Ascending aorta (tissue), 2 donors: ENCODE measurements at regions of chr1 and their contacts with region 1.

Region 1: GRCh38 chr1:20633190-20634064 is at the start of gene PINK1:
- DNase-seq: peak; percentile 33 to 94
- H3K4me3 ChIP-seq: peak within 1 kb of the TSS; percentile 94 to 98
- H3K27ac ChIP-seq: peak within 1 kb of the TSS; percentile 90 to 96
- H3K4me1 ChIP-seq: peaks cover 11% of the 10 kb centered on the region in 2 donors
- H3K27me3 ChIP-seq: no peaks in the 10 kb centered on the region
- CTCF ChIP-seq: peak; percentile 95 to 100 (median 98)
- total RNA-seq, gene PINK1: 113 TPM

Region 2: DNA sequence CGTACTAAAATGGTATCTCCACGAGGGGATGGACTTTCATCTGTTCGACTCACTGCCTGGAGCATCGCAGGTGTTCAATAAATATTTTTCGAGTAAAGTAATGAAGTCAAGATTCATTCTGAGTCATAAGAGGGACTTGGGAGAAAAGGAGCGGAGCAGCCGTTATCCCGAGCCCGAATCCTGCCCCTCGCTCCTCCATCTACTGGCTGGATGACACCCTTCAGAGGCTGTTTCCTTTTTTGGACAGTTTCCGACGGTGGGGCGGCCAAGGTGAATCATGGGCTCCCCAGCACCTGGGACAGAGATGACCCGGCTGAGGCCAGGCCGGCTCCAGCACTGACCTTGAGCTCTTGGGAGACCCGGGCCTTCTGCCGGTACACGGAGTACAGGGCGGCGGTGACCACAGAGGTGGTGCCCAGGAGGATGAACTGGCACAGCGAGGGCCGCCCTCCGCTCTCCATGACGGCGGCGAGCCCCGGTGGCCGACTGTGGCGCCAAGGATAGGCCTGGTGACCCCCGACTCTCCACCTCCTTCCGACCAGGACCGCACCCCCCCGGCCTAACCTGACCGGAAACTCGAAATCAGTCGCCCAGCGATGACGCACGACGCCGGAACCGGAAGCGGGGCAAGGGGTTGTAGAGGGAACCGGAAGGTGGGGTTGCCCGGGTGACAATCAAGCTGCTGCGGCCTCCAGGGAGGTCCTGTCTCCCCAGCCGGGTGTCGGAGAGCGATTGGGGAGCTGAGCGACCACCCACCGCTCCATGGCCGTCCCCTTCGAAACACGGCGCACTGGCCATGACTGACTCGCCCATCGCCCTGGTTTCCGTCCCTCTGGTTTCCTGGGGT is 125.6 kb before region 1 on chr1 and contains the start of gene MUL1:
- intact Hi-C with region 1: loop called (anchors 1 kb)
- DNase-seq: peak; percentile 80 to 97
- H3K4me3 ChIP-seq: peak within 1 kb of the TSS; percentile 72 to 98
- H3K27ac ChIP-seq: peak within 1 kb of the TSS; percentile 63 to 90
- H3K4me1 ChIP-seq: peaks cover 0 to 24% of the 10 kb centered on the region in 2 donors
- H3K27me3 ChIP-seq: no peaks in the 10 kb centered on the region
- CTCF ChIP-seq: no peak
- total RNA-seq, gene MUL1: 34.7 TPM

Region 3: DNA sequence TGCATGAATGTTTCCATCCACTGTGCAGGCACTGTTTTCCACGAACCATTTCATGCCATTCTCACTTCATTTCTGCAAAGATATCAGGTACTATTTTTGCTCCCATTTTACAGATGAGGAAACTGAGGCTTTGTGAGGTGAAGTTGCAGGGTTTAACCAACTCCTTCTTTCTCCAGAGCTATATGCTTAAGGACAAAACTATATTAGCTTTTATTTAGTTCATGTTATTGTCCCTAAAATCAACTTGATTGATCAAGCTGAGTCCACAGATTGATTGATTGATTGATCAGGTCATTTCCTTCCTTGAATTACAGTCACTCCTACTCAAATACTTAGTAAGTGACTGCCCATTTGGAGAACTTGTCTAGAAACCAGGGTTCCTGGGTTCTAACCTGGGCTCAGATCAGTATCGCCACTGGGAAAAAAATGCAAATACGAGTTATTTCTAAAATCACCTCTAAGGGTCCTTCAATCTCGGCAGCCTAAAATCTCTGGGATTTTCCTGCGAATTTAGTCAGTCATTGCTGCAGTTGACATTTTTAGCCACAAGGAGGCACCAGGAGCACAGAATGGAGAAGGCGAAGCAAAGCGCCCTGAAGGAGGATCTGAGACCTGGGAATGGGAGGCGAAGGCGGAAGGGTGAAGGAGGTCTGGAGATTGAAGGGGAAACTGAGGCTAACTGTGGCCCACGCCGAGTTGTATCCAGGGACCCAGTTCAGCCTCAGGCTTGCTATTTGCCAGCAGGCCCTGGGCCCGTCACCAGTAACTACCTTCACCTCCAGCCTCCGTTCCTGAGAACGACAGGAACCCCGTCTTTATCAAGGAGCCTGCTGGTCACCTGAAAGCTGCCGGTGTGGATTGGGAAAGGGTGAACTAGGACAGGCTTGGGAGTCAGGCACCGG is 111.2 kb before region 1 on chr1:
- intact Hi-C with region 1: loop called (anchors 1 kb)
- DNase-seq: peak in 1 of 2 donors; percentile 89
- H3K4me3 ChIP-seq: peak overlapping the region; percentile 3 to 30
- H3K27ac ChIP-seq: no peak overlapping the region
- H3K4me1 ChIP-seq: no peaks in the 10 kb centered on the region
- H3K27me3 ChIP-seq: no peaks in the 10 kb centered on the region
- CTCF ChIP-seq: peak; percentile 90 to 94 (median 93)

Region 4: GRCh38 chr1:20574686-20575540 is 58.5 kb before region 1 on chr1:
- intact Hi-C with region 1: loop called (anchors 5 kb)
- DNase-seq: peak; percentile 20 to 76
- H3K4me3 ChIP-seq: no peak overlapping the region
- H3K27ac ChIP-seq: no peak overlapping the region
- H3K4me1 ChIP-seq: no peaks in the 10 kb centered on the region
- H3K27me3 ChIP-seq: no peaks in the 10 kb centered on the region
- CTCF ChIP-seq: peak; percentile 37 to 57 (median 37)

Region 5: DNA sequence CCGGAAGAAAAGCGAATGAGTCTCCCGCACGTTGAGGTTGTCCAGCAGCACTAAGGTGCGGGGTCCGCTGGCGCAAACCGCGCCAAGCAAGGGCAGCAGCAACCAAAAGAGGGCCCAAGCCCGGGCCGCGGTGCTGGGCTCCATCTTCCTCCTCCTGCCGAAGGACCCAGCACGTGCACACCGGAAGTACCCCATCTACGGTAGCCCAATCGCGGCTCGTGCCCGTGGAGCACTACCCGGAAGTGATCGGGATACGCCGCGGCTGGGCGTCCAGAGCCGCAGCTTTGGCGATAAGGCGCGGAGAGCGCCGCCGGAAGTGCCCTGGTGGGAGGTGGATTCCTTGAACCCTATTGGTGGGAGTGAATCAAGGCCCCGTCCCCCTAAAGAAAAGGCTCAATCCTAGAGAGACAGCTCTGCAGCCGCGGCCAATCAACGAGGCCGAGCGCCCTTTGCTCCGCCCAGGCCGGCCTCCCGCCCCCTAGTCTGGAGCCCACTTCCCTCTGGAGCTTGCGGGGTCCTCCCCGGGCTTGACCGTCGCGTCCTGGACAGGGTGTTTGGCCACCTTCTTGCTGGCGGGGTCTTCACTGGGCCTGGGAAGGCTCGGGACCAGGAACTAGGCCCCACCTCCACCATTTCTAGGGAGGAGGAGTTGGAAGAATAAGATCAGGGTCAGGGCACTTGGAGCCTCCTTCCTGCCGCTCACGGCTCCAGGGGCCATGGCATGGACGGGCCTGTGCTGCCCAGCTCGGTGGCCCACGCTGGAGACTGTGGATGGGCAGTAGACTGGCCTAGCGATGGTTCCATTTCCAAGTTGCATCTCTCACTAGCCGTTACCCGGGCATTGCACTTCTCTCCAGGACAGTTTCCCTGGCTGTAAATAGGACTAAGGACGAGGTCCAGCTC is 28.0 kb after region 1 on chr1 and contains the start of gene DDOST:
- intact Hi-C with region 1: loop called (anchors 1 kb)
- DNase-seq: peak; percentile 82 to 98
- H3K4me3 ChIP-seq: peak within 1 kb of the TSS; percentile 83 to 87
- H3K27ac ChIP-seq: peak within 1 kb of the TSS; percentile 89 to 90
- H3K4me1 ChIP-seq: peaks cover 6 to 18% of the 10 kb centered on the region in 2 donors
- H3K27me3 ChIP-seq: no peaks in the 10 kb centered on the region
- CTCF ChIP-seq: peak in 2 of 3 experiments; percentile 47 to 48
- total RNA-seq, gene DDOST: 142 TPM